ENCODE measurements at regions of chr10 and their contacts with region 1.

Region 1: GRCh38 chr10:79137826-79138225 is 69.1 kb downstream of the ZMIZ1 start:
- DNase-seq: peak; percentile 80
- H3K4me3 Mint-ChIP-seq: peak overlapping the region; percentile 68
- H3K27ac Mint-ChIP-seq: peak overlapping the region; percentile 82
- H3K4me1 Mint-ChIP-seq: peaks cover 36% of the 10 kb centered on the region
- H3K27me3 Mint-ChIP-seq: no peaks in the 10 kb centered on the region

Region 2: GRCh38 chr10:79084012-79084971 is 53.5 kb before region 1 on chr10:
- CTCF ChIA-PET with region 1: no interaction called
- POLR2A ChIA-PET with region 1: no interaction called
- DNase-seq: peak; percentile 26
- H3K4me3 Mint-ChIP-seq: no peak overlapping the region
- H3K27ac Mint-ChIP-seq: peak overlapping the region; percentile 11
- H3K4me1 Mint-ChIP-seq: peaks cover 23% of the 10 kb centered on the region
- H3K27me3 Mint-ChIP-seq: no peaks in the 10 kb centered on the region

Region 3: DNA sequence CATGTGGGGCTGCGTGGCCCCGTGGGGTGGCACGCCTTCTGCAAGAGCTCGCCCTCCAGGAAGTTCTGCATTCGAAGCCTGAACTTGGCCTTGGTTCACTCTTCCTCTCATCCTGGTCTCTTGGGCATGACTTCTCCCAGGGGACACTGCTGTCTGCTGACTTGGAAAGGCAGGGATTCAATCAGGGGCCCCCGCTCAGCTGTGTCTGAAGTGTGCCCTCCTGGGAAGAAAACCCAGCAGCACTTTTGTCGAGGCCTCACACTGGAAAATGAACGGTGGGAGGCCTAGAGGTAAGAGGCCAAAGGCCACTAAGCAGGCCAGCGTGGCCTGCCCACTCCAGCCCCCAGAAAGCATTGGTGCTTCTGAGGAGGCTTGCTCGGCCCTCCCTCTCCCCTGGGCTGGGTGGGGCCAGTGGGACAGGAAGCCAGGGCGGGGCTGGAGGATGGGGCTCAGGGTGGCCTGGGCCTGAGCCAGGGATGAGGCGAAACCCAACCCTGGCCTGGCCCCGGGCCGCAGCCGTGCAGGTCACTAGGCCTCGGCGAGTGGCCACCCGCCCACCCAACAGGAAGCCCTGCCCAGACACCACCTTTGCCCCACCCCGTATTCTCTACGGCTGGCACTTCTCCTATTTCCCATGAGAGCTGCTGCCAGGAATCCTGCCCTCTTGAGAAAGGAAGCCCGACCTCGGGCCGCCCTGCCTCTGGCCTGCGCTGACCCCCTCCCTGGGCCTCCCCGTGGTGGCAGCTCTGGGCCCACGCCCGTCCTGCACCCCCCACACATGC is 12.0 kb after region 1 on chr10:
- CTCF ChIA-PET with region 1: interaction called, 4 read pairs
- POLR2A ChIA-PET with region 1: interaction called, 30 read pairs
- DNase-seq: peak; percentile 77
- H3K4me3 Mint-ChIP-seq: no peak overlapping the region
- H3K27ac Mint-ChIP-seq: peak overlapping the region; percentile 81
- H3K4me1 Mint-ChIP-seq: peaks cover 62% of the 10 kb centered on the region
- H3K27me3 Mint-ChIP-seq: no peaks in the 10 kb centered on the region